H1 (cell line): ENCODE measurements at regions of chr18 and their contacts with region 1.

Region 1: DNA sequence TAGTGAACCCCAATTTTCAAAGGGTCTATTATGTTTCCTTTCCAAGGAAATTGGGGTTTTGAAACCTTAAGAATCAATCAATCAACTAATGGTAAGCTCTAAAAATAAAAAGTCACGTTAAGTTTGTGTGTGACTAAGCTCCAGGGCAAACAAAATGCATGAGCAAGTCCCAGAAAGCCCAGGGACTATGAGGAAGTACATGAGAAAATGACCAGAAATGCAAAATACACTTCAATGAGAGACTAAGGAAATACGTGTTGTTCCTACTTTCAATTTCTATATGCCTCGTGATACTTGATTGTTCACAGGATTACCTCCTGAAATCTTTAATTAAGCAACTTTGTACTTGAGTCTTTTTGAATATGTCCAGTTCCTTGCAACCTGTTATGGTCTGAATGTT is 684.4 kb upstream of the SYT4 start:
- DNase-seq: no peak
- H3K4me3 ChIP-seq: no peak overlapping the region
- H3K27ac ChIP-seq: no peak overlapping the region
- H3K4me1 ChIP-seq: no peaks in the 10 kb centered on the region
- H3K27me3 ChIP-seq: no peaks in the 10 kb centered on the region
- CTCF ChIP-seq: no peak
- EP300 ChIP-seq: no peak
- POLR2A ChIP-seq: no peak
- RAD21 ChIP-seq: no peak

Region 2: GRCh38 chr18:43949291-43949690 is 12.4 kb before region 1 on chr18:
- CTCF ChIA-PET with region 1: interaction called, 11 read pairs
- POLR2A ChIA-PET with region 1: no interaction called
- DNase-seq: no peak
- H3K4me3 ChIP-seq: no peak overlapping the region
- H3K27ac ChIP-seq: no peak overlapping the region
- H3K4me1 ChIP-seq: no peaks in the 10 kb centered on the region
- H3K27me3 ChIP-seq: no peaks in the 10 kb centered on the region
- CTCF ChIP-seq: no peak
- EP300 ChIP-seq: no peak
- POLR2A ChIP-seq: no peak
- RAD21 ChIP-seq: no peak